ENCODE measurements at regions of chr2 and their contacts with region 1.

Region 1: DNA sequence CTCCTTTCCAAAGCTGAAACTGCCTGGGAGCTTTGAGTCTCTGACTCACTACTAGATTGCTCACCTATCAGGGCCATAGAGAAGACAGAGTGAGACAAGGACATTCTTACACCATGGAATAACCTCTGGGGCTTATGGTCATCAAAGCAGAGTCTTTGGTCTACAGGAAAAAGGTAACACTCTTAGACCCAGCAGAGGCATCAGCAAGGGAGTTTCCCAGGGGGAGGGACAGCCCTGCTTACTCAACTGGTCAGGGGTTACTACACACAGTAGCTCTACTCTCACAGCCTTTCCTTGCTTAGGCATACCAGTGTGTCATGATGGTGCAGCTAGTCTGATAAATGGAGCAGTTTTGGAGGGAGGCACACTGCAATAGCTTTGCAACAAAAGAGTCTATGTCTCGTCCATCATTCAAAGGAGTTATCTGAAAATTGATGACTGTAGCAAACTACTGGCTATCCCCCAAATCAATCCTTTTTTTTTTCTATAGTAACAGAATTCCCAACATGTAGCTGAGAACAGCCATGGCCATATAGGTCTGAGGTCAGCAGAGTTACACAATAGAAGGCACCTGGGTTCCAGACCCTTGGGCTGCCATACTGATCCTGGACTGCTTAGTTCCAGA is 22.4 kb upstream of the CD28 start:
- DNase-seq: peak in 1 of 2 donors; percentile 58
- ATAC-seq: no peak
- H3K4me3 ChIP-seq: no peak overlapping the region
- H3K27ac ChIP-seq: peak overlapping the region; percentile 100
- H3K4me1 ChIP-seq: peaks cover 11 to 14% of the 10 kb centered on the region in 2 donors
- H3K27me3 ChIP-seq: no peaks in the 10 kb centered on the region

Region 2: GRCh38 chr2:203804070-203804469 is 120.0 kb after region 1 on chr2:
- intact Hi-C with region 1: loop called (anchors 5 kb)
- DNase-seq: peak; percentile 70 to 79
- ATAC-seq: peak; percentile 37
- H3K4me3 ChIP-seq: no peak overlapping the region
- H3K27ac ChIP-seq: no peak overlapping the region
- H3K4me1 ChIP-seq: peaks cover 0 to 3% of the 10 kb centered on the region in 2 donors
- H3K27me3 ChIP-seq: no peaks in the 10 kb centered on the region

Region 3: DNA sequence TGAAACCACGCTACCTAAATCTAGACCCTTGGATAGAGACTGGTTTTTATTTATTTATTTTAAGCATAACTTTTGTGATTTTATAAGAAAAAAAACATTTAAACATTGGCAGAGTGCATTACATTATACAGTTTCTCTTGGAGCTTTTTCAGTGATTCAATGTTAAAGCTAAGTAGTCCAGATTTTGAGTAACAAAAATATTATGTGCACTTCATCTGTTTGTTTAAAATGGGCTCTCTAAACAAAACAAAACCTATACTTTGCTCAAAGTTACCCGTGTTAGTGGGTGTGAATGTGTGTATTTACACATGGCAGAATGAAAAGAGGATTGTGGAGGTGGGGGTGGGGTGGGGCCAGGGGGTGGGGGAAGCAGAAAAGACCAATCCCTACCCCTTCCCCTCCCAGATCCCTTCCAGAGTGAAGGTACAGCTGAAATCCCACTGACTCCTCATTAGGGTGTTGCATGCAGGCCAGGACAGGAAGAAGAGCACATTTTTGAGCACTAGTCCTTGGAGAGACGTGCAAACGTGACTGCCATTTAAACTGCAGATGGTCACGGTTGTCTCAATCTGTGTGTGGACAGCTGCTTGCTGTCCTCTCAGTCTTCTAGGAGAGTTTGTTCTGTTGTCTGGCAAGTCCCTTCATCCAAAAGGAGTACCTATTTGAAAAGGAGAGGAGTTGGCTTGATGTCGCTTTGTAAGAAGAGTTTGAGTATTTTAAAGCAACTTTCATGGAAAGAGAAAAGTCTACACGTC is 555.5 kb after region 1 on chr2:
- intact Hi-C with region 1: loop called in 1 of 2 experiments (anchors 10 kb)
- DNase-seq: no peak
- ATAC-seq: no peak
- H3K4me3 ChIP-seq: no peak overlapping the region
- H3K27ac ChIP-seq: no peak overlapping the region
- H3K4me1 ChIP-seq: peaks cover 4 to 8% of the 10 kb centered on the region in 2 donors
- H3K27me3 ChIP-seq: no peaks in the 10 kb centered on the region

Measured in aorta (tissue), 5 donors.